ENCODE measurements at regions of chr1 and their contacts with region 1.

Region 1: DNA sequence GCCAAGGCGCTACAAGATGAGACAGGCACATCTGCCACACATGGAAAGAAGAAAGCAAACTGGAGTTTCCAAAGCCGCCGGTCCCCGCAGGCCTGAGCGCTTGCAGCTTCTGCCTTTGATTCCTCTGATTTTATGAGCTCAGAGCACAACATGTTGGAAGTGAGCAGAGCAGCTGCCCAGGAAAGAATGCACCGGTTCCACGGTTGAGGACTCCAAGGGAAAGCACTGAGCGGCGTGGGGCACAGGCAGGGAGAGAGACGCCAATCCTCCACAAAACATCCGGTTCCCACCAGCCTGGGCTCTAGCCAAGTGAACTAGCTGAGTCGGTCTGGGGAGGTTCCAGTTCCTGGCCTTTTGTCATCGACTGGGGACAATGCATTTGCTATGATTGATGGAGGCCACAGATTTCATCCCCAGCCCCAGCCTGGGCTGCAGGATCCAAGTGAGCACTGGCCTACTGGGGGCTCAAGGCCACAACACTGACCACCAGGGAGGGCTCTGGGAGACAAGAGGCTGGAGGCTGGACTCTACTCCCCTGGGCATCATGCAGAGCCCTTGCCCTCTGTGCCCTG is 253.1 kb upstream of the IRF2BP2 start:
- DNase-seq: peak; percentile 48 to 88
- H3K4me3 ChIP-seq: peak overlapping the region in 1 of 2 donors; percentile 29
- H3K27ac ChIP-seq: peak overlapping the region; percentile 80 to 89
- H3K4me1 ChIP-seq: peaks cover 0 to 33% of the 10 kb centered on the region in 2 donors
- H3K27me3 ChIP-seq: no peaks in the 10 kb centered on the region
- CTCF ChIP-seq: no peak

Region 2: DNA sequence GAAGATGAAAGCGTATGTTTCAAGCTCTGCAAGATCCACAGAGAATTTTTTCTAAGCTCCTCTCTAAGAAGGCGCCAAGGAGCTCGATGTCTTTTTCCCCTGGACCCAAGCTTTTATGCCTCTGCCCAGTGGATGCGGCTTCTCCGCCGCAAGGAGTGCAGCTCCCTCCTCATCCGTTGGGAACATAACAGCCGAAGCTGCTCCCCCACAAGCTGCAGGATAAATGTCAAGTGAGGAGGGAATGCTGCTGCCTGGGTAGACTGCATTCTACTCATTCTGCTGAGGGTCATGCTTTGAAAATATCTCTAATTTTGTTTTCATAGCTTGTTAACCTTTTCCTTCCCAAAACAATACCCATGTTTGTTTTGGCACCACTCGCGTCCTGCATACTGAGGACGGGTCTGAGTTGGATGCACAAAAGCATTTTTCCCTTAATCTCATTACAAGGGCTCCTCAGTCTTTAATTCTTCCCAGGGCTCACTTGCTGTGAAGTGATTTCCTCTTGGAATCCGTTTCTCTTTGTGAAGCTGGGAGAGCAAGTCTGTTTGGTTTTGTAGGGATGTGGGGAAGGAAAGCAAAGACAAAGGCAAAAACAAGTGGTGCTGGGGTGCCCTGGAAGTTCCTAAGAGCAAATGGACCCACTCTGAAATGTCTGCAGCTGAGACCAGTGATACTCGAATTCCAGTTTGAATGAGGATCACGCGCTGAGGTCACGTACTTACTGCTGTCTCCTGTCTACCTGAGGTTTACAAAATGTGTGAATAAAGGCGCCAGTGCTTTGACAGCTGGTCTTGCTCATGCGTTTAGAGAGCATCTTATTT is 119.0 kb before region 1 on chr1:
- intact Hi-C with region 1: loop called (anchors 5 kb)
- DNase-seq: no peak
- H3K4me3 ChIP-seq: peak overlapping the region in 1 of 2 donors; percentile 39
- H3K27ac ChIP-seq: peak overlapping the region; percentile 24 to 42
- H3K4me1 ChIP-seq: peaks cover 0 to 5% of the 10 kb centered on the region in 2 donors
- H3K27me3 ChIP-seq: no peaks in the 10 kb centered on the region
- CTCF ChIP-seq: peak in 1 of 3 experiments; percentile 4

Region 3: DNA sequence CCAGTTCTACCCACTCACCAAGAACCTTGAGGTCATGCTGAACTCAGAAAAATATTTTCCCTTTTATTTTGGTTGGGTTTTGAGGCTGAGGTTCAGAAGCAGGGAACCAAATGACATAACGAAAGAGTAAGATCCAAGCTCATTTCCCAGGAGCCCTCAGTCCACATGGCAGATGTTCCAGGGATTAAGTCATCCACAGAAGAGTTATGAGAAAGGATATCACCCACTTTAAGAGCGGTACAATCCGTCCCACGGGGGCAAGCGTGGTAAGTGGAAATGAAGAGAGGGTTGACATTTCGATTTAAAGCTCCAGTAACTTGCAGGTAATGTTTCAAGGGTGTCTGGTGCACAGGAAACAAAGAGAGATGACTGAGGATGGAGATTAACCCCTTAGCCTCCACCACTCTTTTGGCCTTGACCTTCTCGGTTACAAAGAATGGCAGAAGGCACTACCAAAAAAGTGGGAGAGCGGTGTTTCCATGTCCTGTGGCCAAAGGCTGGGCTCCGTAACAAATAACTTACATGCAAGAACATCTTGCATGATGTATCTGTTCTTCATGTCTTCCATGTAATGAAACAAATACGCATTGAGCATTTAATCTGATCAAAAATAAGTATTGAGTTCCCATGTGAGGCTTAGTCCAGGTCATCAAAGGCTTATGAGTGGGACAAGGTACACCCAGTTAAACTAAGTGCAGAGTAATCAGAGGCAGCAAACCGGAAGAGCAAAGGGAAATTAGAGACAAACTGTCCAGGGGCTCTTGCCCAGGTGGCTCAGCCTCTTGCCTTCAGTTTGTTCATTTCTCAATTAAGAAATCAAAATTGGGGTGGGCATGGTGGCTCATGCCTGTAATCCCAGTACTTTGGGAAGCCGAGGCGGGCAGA is 24.2 kb after region 1 on chr1:
- intact Hi-C with region 1: loop called (anchors 2 kb)
- DNase-seq: no peak
- H3K4me3 ChIP-seq: no peak overlapping the region
- H3K27ac ChIP-seq: peak overlapping the region; percentile 69 to 75
- H3K4me1 ChIP-seq: peaks cover 4 to 18% of the 10 kb centered on the region in 2 donors
- H3K27me3 ChIP-seq: no peaks in the 10 kb centered on the region
- CTCF ChIP-seq: no peak

Region 4: DNA sequence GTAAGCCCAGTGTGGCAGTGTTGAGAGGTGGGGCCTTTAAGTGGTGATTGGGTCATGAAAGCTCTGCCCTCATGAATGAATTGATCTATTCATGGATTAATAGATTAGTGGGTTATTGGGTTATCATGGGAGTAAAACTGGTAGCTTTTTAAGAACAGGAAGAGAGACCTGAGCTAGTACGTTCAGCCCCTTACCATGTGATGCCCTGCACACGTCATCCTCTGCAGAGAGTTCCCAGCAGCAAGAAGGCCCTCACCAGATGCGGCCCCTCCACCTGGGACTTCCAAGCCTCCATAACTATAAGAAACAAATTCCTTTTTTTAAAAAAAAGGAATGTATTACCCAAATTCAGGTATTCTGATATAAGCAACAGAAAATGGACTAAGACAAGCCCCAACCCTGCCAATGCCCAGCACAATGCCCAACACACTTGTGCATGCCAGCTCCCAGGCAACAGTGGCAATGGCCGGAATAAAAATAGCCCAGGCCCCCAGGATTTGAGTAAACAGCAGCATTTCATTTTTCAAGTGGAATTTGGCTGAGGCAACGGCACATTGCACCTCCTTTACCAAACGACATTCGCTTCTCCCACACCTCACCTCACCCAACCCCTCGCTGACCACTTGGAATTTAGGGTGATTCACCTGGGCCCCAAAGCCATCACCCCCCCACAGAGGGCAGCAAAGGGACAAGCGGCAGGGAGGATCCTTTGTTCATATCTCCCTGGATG is 49.7 kb after region 1 on chr1:
- intact Hi-C with region 1: loop called (anchors 5 kb)
- DNase-seq: peak in 1 of 2 donors; percentile 82
- H3K4me3 ChIP-seq: peak overlapping the region in 1 of 2 donors; percentile 37
- H3K27ac ChIP-seq: peak overlapping the region; percentile 86 to 94
- H3K4me1 ChIP-seq: peaks cover 26 to 55% of the 10 kb centered on the region in 2 donors
- H3K27me3 ChIP-seq: no peaks in the 10 kb centered on the region
- CTCF ChIP-seq: peak in 1 of 3 experiments; percentile 19

Measured in ascending aorta (tissue), 2 donors.